Prostate gland (tissue), 2 donors: ENCODE measurements at regions of chr10 and their contacts with region 1.

Region 1: GRCh38 chr10:75401569-75402485 is at the start of gene ZNF503:
- DNase-seq: peak; percentile 99
- H3K4me3 ChIP-seq: peak within 1 kb of the TSS; percentile 98 to 100
- H3K27ac ChIP-seq: peak within 1 kb of the TSS; percentile 98 to 99
- H3K4me1 ChIP-seq: peaks cover 9% of the 10 kb centered on the region
- H3K27me3 ChIP-seq: no peaks in the 10 kb centered on the region
- CTCF ChIP-seq: peak; percentile 12 to 72 (median 38)
- POLR2A ChIP-seq: peak; percentile 93
- total RNA-seq, gene ZNF503: 23.9 to 33.7 TPM

Region 2: GRCh38 chr10:75662715-75663114 is 260.9 kb after region 1 on chr10:
- intact Hi-C with region 1: loop called (anchors 5 kb)
- DNase-seq: peak; percentile 63
- H3K4me3 ChIP-seq: no peak overlapping the region
- H3K27ac ChIP-seq: peak overlapping the region; percentile 60 to 68
- H3K4me1 ChIP-seq: peaks cover 5% of the 10 kb centered on the region
- H3K27me3 ChIP-seq: no peaks in the 10 kb centered on the region
- CTCF ChIP-seq: no peak
- POLR2A ChIP-seq: no peak

Region 3: DNA sequence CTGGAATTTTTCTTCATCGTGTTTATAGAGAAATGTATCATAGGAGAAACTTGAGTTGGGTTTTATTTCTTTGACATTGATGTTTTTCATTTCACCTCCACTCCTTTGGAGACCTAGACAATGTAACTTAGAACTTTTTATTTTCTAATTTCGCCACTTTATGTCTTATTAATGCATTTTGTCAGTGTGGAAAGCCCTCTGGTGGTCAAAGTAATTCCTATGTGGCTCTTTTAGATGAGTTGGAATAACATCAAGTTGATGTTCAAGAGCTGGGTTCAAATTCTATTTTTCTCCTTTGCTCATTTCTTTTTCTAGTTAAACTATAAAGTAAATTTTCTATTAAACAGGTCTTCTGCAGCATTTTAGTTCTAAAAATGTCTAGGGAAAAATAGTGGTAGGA is 508.2 kb after region 1 on chr10:
- intact Hi-C with region 1: loop called (anchors 10 kb)
- DNase-seq: no peak
- H3K4me3 ChIP-seq: no peak overlapping the region
- H3K27ac ChIP-seq: no peak overlapping the region
- H3K4me1 ChIP-seq: no peaks in the 10 kb centered on the region
- H3K27me3 ChIP-seq: no peaks in the 10 kb centered on the region
- CTCF ChIP-seq: peak; percentile 31 to 72 (median 60)
- POLR2A ChIP-seq: no peak

Region 4: DNA sequence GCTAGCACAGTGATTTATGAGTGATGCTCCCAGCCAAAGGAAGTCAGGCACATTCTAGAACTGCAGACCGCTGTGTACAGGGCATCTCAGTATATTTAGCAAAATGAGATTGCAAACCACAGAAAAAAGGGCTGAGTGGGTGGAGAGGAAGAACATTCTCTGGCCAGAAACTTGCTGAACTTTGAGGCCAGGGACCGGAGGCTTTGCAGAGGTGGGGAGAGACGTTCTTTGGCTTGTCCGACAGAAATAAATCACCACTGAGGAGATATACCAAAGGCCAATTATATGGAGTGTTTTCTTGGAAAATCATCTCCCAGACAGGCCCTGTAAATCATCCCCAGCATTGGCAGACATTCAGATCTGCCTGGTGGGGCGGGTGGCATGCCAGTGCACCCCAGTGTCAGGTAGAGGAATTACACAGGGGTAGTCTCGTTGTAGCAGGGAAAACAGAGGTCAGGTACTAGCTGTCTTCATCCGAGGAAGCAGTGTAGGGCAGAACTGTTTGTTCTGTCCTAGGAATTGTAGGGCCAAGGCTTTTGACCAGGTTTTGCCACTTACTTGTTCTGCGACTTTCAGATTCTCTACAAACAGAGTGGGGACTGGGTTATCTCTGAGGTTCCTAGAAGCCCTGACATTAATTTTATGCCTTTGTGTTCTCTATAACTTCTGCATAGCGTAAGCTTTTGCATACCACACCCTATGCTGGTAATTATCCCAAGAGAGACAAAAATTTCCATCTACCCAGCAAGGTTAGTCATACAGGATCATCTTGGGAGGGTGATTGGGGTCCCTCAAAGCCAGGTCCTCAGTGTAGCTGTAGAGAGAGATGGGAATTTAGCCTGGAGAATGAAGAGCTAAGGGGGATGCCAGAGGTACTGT is 685.2 kb after region 1 on chr10:
- intact Hi-C with region 1: loop called (anchors 2 kb)
- DNase-seq: peak; percentile 77
- H3K4me3 ChIP-seq: no peak overlapping the region
- H3K27ac ChIP-seq: peak overlapping the region; percentile 13 to 19
- H3K4me1 ChIP-seq: no peaks in the 10 kb centered on the region
- H3K27me3 ChIP-seq: no peaks in the 10 kb centered on the region
- CTCF ChIP-seq: peak; percentile 58 to 80 (median 68)
- POLR2A ChIP-seq: no peak

Region 5: DNA sequence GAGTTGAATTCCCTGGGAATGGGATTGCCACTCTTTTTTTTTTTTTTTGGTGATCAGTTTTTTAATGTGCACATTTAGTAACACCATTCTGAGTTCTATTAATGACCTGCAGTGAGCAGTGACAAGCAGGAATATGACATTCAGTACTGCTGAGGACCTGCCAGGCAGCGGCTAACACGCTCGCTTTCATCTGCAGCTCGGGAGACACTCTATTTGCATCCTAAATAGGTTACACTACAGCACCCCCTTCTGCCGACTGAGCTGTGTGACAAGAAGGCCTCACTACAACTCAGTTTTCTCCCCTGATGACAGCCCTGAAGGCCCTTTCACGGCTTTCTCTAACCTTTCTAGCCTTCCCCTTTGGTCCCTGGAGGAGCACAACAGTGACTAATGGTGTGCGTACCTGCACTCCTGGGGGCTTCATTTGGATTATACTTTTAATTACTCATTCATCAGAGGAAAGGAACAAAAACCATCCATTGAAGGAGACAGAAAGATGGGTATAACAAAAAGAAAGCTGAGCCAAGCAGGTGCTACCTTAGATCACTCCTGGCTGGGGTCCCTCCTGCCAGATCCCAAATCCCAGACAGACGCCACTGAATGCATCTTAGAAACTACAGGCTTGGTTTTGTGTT is 902.0 kb after region 1 on chr10:
- intact Hi-C with region 1: loop called (anchors 5 kb)
- DNase-seq: peak; percentile 83
- H3K4me3 ChIP-seq: no peak overlapping the region
- H3K27ac ChIP-seq: peak overlapping the region in 1 of 2 donors; percentile 16
- H3K4me1 ChIP-seq: no peaks in the 10 kb centered on the region
- H3K27me3 ChIP-seq: no peaks in the 10 kb centered on the region
- CTCF ChIP-seq: peak in 3 of 4 experiments; percentile 39 to 73 (median 69)
- POLR2A ChIP-seq: no peak

Region 6: DNA sequence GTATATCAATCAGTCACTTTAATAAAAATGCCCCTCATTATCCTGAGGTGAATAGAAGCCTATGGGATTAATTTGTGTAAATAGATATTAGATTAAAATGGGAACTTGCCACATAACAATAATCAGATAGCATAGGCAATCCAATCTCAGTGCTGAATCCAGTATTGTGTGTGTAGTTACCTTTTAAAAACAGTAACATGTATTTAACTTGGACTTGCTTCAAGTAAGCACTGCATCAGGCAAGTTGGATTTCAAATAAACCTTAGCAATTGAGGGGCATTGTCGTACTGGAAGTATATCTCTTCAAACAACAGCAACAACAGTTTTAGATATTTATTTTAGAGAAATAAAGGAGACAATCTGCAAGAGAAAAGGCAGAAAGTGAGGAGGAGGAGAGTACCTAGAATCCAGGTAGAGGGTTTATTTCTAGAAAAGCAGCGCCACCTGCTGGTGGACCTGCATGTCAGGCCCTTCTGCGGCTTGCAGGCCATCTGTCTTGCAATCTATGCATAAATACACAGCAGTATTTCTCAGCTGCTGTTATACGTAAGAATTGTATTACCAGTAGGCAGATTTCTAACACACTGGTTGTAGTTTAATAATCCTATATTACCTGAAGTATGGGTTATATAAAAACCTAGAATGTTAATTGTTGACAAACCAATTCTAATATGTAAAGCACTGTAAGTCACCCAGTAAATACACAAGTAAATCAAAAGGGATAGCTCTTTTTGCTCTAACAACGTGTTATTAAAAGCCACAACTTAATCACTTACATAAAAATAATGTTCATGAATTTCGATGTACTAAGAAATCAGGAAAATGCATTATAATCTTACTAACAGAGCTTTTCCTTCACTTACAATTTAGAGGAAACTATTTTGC is 1583.0 kb after region 1 on chr10:
- intact Hi-C with region 1: loop called (anchors 10 kb)
- DNase-seq: peak; percentile 66
- H3K4me3 ChIP-seq: no peak overlapping the region
- H3K27ac ChIP-seq: no peak overlapping the region
- H3K4me1 ChIP-seq: no peaks in the 10 kb centered on the region
- H3K27me3 ChIP-seq: no peaks in the 10 kb centered on the region
- CTCF ChIP-seq: peak; percentile 73 to 95 (median 78)
- POLR2A ChIP-seq: no peak